PC-3 (cell line): ENCODE measurements at regions of chr21 and their contacts with region 1.

Region 1: DNA sequence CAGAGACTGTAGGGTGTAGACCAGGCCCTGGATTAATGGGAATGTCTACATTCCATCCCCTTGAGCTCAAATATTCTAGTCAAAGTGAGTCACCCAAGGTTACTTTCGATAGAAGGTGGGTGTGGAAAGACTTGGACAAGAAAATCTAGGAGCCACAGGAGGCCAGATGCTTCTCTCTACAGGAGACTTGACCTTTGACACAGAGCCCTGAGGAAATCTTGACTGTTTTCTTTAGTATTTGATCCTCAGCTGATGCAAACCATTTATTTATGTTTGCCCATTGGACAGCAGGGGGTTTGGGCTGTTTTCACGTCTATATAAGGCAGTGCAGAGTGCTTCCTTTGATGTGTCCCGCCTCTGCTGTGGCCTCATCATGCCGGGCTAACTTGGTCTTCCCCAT is 15.7 kb upstream of the MAP3K7CL start:
- DNase-seq: peak; percentile 88
- ATAC-seq: peak; percentile 99
- H3K4me3 ChIP-seq: no peak overlapping the region
- H3K27ac ChIP-seq: peak overlapping the region; percentile 5; the same call in 1 of the 2 replicates
- H3K4me1 ChIP-seq: peaks cover 14% of the 10 kb centered on the region
- H3K27me3 ChIP-seq: no peaks in the 10 kb centered on the region
- CTCF ChIP-seq: no peak

Region 2: DNA sequence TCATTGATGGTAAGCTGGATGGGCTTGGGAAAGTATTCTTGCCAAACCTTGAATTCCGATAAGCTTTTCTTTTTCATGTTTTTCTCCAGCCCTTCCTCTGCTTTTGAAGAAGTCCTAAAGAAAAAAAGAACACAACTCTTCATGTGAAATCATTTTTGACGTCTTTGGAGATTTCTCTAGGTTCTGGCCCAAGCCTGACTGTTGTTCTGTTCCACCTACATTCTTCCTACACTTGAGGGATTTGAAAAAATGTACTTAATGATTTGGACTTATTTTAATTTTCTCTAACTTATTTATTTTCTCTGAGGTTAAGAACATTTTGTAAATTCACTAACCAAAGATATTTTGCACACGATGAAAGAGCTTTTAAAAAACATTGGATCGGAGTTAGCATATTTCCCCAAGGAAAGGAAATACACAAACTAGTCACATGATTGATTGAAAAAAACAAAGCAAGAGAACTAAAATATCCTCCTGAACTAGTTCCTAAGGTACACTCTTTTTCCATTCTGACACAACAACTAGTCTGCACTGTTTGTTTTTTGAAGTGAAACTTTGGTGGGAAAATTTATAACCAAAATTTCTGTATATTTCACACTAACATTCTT is 204.4 kb before region 1 on chr21:
- CTCF ChIA-PET with region 1: no interaction called
- POLR2A ChIA-PET with region 1: no interaction called
- intact Hi-C with region 1: no loop called
- DNase-seq: no peak
- ATAC-seq: no peak
- H3K4me3 ChIP-seq: no peak overlapping the region
- H3K27ac ChIP-seq: no peak overlapping the region
- H3K4me1 ChIP-seq: no peaks in the 10 kb centered on the region
- H3K27me3 ChIP-seq: no peaks in the 10 kb centered on the region
- CTCF ChIP-seq: no peak

Region 3: DNA sequence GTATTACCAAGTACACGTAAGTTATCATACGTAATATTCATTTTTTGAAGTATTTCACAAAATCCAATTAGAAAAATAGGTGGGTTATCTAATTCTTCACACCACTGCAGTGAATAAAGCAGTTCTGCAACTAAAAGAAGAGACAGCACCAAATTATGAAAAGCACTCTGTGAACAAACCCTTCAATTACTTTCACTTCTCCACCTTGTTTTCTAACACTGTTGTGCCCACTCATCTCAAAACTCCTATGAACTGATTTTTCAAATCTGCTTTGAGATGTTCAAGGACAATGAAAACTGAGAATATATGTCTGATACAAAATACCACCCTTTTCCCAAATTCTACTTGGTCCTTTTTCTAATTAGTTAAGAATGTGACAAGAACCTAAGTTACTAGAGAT is 161.5 kb before region 1 on chr21:
- CTCF ChIA-PET with region 1: no interaction called
- POLR2A ChIA-PET with region 1: no interaction called
- intact Hi-C with region 1: no loop called
- DNase-seq: no peak
- ATAC-seq: no peak
- H3K4me3 ChIP-seq: no peak overlapping the region
- H3K27ac ChIP-seq: no peak overlapping the region
- H3K4me1 ChIP-seq: peaks cover 16% of the 10 kb centered on the region
- H3K27me3 ChIP-seq: no peaks in the 10 kb centered on the region
- CTCF ChIP-seq: no peak

Region 4: GRCh38 chr21:28992526-28993292 is 122.1 kb before region 1 on chr21 and contains the start of gene LTN1:
- CTCF ChIA-PET with region 1: no interaction called
- POLR2A ChIA-PET with region 1: no interaction called
- intact Hi-C with region 1: no loop called
- DNase-seq: peak; percentile 99
- ATAC-seq: peak; percentile 98
- H3K4me3 ChIP-seq: peak within 1 kb of the TSS; percentile 83
- H3K27ac ChIP-seq: peak within 1 kb of the TSS; percentile 60
- H3K4me1 ChIP-seq: peaks cover 23% of the 10 kb centered on the region
- H3K27me3 ChIP-seq: no peaks in the 10 kb centered on the region
- CTCF ChIP-seq: no peak
- total RNA-seq, gene LTN1: 16.4 and 21.0 TPM in 2 replicates

Region 5: GRCh38 chr21:29145354-29145782 is 30.6 kb after region 1 on chr21:
- CTCF ChIA-PET with region 1: no interaction called
- POLR2A ChIA-PET with region 1: no interaction called
- intact Hi-C with region 1: loop called (anchors 2 kb)
- DNase-seq: peak; percentile 97
- ATAC-seq: peak; percentile 93
- H3K4me3 ChIP-seq: peak overlapping the region; percentile 18; the same call in 1 of the 2 replicates
- H3K27ac ChIP-seq: peak overlapping the region; percentile 77
- H3K4me1 ChIP-seq: peaks cover 34% of the 10 kb centered on the region
- H3K27me3 ChIP-seq: no peaks in the 10 kb centered on the region
- CTCF ChIP-seq: no peak

Region 6: GRCh38 chr21:29384683-29385322 is 270.0 kb after region 1 on chr21:
- CTCF ChIA-PET with region 1: no interaction called
- POLR2A ChIA-PET with region 1: no interaction called
- intact Hi-C with region 1: no loop called
- DNase-seq: no peak
- ATAC-seq: no peak
- H3K4me3 ChIP-seq: no peak overlapping the region
- H3K27ac ChIP-seq: no peak overlapping the region
- H3K4me1 ChIP-seq: peaks cover 26% of the 10 kb centered on the region
- H3K27me3 ChIP-seq: no peaks in the 10 kb centered on the region
- CTCF ChIP-seq: no peak